Endothelial cell of umbilical vein (primary cell): ENCODE measurements at regions of chr12 and their contacts with region 1.

Region 1: GRCh38 chr12:47397664-47398281 is 308.1 kb downstream of the RPAP3 start:
- DNase-seq: peak; percentile 55
- H3K4me3 ChIP-seq: no peak overlapping the region
- H3K27ac ChIP-seq: no peak overlapping the region
- H3K4me1 ChIP-seq: peaks cover 12% of the 10 kb centered on the region
- H3K27me3 ChIP-seq: no peaks in the 10 kb centered on the region
- CTCF ChIP-seq: peak; percentile 58 to 59
- POLR2A ChIP-seq: no peak

Region 2: GRCh38 chr12:47032644-47033043 is 365.1 kb before region 1 on chr12:
- CTCF ChIA-PET with region 1: interaction called, 306 read pairs
- POLR2A ChIA-PET with region 1: interaction called, 3 read pairs
- dilution Hi-C with region 1: no loop called
- intact Hi-C with region 1: loop called (anchors 1 kb)
- DNase-seq: peak; percentile 74
- H3K4me3 ChIP-seq: no peak overlapping the region
- H3K27ac ChIP-seq: no peak overlapping the region
- H3K4me1 ChIP-seq: no peaks in the 10 kb centered on the region
- H3K27me3 ChIP-seq: no peaks in the 10 kb centered on the region
- CTCF ChIP-seq: peak; percentile 17 to 25
- POLR2A ChIP-seq: no peak

Region 3: GRCh38 chr12:47095446-47096236 is 302.1 kb before region 1 on chr12:
- CTCF ChIA-PET with region 1: interaction called, 11 read pairs
- POLR2A ChIA-PET with region 1: no interaction called
- dilution Hi-C with region 1: no loop called
- intact Hi-C with region 1: no loop called
- DNase-seq: peak; percentile 43
- H3K4me3 ChIP-seq: no peak overlapping the region
- H3K27ac ChIP-seq: peak overlapping the region; percentile 4
- H3K4me1 ChIP-seq: peaks cover 13% of the 10 kb centered on the region
- H3K27me3 ChIP-seq: no peaks in the 10 kb centered on the region
- CTCF ChIP-seq: no peak
- POLR2A ChIP-seq: no peak

Region 4: DNA sequence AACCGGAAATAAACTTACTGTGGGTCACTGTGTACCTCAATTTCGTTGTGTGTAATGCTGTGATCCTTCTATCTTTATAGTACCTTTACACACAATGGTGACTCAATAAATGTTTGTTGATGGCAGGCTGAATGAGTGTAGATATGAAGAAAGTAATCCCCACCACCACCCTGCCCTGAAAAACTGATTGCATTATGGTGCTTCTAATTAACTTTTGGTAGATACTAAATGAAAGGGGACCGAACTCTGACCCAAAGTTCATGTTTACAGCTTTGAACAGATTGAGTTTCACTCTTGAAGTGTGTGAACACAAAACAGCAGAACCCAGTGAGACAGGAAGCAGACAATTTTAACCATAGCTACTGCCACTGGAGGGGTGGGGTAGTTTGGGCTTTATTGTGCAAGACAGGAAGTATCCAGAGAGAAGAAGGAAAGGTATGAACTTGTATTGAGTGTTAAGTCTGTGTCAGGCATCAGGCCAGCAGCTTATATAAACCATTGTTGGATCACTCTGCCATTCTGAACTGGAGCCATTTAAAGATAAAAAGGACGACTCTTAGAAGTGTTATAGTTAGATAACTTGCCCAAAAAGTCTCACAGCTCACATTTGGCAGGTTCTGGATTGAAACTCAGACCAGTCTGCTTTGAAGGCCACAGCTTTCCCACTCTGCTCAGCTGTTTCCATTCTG is 121.0 kb before region 1 on chr12:
- CTCF ChIA-PET with region 1: interaction called, 13 read pairs
- POLR2A ChIA-PET with region 1: no interaction called
- dilution Hi-C with region 1: no loop called
- intact Hi-C with region 1: no loop called
- DNase-seq: peak; percentile 54
- H3K4me3 ChIP-seq: no peak overlapping the region
- H3K27ac ChIP-seq: no peak overlapping the region
- H3K4me1 ChIP-seq: peaks cover 27% of the 10 kb centered on the region
- H3K27me3 ChIP-seq: peaks cover 0 to 5% of the 10 kb centered on the region in 2 experiments
- CTCF ChIP-seq: no peak
- POLR2A ChIP-seq: no peak

Region 5: DNA sequence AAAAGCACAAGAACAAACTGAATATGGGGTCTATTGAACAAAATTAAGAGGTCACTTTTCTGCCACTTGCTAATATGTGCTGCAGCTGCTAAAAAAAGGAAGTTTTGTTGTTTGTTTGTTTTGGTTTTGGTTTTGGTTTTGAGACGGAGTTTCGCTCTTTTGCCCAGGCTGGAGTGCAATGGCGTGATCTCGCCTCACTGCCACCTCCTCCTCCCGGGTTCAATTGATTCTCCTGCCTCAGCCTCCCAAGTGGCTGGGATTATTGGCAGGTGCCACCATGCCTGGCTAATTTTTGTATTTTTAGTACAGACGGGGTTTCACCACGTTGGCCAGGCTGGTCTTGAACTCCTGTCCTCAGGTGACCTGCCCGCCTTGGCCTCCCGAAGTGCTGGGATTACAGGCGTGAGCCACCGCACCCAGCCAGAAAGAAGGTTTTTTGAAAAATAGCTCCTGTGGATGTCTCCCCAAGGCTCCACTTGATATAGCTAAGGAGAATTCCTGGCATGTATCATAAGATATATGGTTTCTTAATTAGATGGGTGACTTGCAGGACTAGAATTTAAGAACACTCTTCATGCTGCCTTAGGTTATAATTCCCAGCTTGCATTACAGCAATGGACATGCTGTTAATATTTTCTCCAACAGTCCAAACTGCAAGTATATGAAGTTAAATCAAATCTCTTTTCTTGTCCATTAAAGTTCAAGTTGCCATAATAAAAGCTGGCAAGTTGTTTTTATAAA is 80.4 kb before region 1 on chr12:
- CTCF ChIA-PET with region 1: interaction called, 14 read pairs
- POLR2A ChIA-PET with region 1: no interaction called
- dilution Hi-C with region 1: no loop called
- intact Hi-C with region 1: no loop called
- DNase-seq: no peak
- H3K4me3 ChIP-seq: no peak overlapping the region
- H3K27ac ChIP-seq: no peak overlapping the region
- H3K4me1 ChIP-seq: peaks cover 20% of the 10 kb centered on the region
- H3K27me3 ChIP-seq: no peaks in the 10 kb centered on the region
- CTCF ChIP-seq: no peak
- POLR2A ChIP-seq: no peak

Region 6: DNA sequence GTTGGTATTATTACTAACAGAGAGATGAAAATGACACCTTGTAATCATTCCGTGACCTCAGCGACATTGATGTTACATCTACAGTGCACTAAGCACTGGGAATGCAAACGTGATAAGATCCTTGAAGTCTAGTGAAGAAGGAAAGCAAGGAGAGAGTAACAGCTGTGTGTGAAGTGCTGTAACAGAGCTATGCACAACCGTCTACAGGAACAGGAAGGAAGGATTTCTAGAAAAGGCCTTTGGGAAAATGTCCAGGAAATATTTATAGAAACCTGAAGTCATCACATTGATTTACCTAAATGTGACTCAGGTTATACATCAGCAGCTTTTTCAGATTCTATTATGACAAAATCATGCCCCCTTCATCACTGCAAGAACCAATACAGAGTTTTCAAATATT is 13.8 kb before region 1 on chr12:
- CTCF ChIA-PET with region 1: interaction called, 20 read pairs
- POLR2A ChIA-PET with region 1: no interaction called
- dilution Hi-C with region 1: no loop called
- intact Hi-C with region 1: no loop called
- DNase-seq: peak; percentile 73
- H3K4me3 ChIP-seq: no peak overlapping the region
- H3K27ac ChIP-seq: no peak overlapping the region
- H3K4me1 ChIP-seq: peaks cover 20% of the 10 kb centered on the region
- H3K27me3 ChIP-seq: no peaks in the 10 kb centered on the region
- CTCF ChIP-seq: no peak
- POLR2A ChIP-seq: no peak